GM10248 (cell line): ENCODE measurements at regions of chr17 and their contacts with region 1.

Region 1: DNA sequence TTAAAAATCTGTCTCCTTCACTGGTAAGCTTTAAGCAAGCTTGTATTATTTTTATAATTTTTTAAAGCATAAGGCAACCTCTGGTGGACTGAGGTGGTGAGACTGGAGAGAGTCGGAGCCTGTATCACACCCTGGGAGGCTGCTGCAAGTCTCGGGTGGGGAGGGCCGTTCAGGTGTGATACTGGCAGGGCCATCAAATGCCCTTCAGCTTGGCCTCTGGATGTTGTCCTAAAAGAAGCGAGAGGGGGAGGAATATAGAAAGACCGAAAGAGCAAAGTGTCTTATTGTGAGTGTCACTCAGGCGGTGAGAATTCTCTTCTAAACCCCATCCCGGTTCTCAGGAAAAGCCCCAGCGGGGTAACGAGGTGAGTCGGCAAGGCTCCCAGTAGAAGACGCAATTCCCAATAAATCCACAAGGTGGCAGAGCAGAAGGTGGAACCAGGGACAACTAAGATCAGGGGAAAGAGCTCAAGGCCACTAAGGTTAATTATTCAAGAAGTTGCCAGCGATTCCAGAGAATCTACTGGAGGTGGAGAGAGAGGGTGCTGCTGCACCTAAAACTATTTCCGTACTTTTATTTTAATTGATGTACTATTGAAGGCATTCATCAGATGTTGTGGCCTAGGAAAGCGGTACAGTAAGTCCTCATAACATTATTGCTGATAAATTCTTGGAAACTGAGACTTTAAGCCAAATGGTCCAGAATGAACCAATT is 14.1 kb downstream of the C17orf67 start:
- DNase-seq: peak; percentile 83
- CTCF ChIP-seq: peak; percentile 75

Region 2: DNA sequence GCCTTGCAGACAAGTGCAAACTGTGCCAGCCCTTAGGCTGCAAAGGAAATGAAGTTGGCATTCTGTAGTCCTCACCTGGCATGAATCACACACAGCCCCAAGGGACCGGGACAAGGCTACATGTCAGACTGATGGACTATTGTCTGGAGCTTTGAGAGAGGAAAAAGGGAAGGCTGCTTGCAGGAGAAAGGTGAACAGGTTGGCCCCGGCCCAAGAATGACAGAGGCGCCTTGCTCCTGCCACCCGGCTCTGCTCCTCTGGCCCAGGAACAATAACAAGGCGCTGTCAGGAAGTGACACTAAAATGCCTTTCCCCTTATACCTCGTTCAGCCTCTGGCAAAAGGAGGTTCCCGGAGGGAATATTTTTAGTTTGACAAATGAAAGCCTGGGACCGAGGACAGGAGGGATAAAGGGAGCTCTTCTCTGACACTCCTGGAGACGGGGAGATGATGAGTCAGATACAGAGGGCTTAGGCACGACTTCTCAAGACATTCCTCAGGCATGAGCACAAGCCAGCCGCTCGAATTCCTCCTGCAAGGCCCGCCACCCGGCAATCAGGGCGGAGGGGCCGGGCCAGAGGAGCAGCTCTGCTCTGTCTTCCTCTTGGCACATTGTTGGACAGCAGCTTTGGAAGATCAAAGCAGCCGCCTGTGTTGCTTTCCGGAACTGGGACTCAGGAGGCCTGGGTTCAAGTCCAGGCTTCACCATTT is 120.2 kb before region 1 on chr17:
- CTCF ChIA-PET with region 1: no interaction called
- POLR2A ChIA-PET with region 1: no interaction called
- DNase-seq: no peak
- CTCF ChIP-seq: no peak

Region 3: GRCh38 chr17:56833809-56834379 is 14.3 kb after region 1 on chr17 and contains the starts of genes C17orf67 and DGKE:
- CTCF ChIA-PET with region 1: interaction called, 44 read pairs
- POLR2A ChIA-PET with region 1: interaction called, 3 read pairs
- DNase-seq: peak; percentile 99
- CTCF ChIP-seq: no peak

Region 4: DNA sequence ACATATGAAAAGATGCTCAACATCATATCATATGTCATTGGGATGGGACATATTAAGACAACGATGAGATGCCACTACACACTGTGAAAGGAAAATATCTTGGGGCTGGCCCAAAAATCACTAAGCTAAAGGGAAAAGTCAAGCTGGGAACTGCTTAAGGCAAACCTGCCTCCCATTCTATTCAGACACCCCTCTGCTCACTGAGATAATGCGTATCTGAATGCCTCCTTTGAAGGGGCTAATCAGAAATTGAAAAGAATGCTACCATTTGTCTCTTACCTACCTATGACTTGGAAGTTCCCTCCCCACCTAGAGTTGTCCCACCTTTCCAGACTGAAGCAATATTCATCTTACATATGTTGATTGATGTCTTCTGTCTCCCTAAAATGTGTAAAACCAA is 105.5 kb after region 1 on chr17:
- CTCF ChIA-PET with region 1: interaction called, 15 read pairs
- POLR2A ChIA-PET with region 1: no interaction called
- DNase-seq: no peak
- CTCF ChIP-seq: no peak

Region 5: DNA sequence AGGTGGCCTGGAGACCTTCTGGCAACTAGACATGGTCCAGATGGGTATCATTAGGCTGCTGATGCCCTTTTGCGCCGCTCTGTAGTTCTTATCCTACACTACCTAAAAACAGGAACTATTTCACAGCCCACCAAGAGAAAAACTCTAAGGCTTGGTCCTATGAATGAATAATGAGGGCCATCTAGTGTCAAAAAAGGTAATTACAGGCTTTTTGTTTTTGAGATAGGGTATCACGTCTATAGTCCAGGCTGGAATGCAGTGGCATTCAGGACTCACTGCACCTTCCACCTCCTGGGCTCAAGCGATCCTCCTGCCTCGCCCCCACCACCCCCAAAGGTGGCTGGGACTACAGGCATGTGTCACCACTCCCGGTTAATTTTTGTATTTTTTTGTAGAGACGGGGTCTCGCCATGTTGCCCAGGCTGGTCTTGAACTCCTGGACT is 120.3 kb after region 1 on chr17:
- CTCF ChIA-PET with region 1: interaction called, 144 read pairs
- POLR2A ChIA-PET with region 1: no interaction called
- DNase-seq: peak; percentile 70
- CTCF ChIP-seq: peak; percentile 59

Region 6: DNA sequence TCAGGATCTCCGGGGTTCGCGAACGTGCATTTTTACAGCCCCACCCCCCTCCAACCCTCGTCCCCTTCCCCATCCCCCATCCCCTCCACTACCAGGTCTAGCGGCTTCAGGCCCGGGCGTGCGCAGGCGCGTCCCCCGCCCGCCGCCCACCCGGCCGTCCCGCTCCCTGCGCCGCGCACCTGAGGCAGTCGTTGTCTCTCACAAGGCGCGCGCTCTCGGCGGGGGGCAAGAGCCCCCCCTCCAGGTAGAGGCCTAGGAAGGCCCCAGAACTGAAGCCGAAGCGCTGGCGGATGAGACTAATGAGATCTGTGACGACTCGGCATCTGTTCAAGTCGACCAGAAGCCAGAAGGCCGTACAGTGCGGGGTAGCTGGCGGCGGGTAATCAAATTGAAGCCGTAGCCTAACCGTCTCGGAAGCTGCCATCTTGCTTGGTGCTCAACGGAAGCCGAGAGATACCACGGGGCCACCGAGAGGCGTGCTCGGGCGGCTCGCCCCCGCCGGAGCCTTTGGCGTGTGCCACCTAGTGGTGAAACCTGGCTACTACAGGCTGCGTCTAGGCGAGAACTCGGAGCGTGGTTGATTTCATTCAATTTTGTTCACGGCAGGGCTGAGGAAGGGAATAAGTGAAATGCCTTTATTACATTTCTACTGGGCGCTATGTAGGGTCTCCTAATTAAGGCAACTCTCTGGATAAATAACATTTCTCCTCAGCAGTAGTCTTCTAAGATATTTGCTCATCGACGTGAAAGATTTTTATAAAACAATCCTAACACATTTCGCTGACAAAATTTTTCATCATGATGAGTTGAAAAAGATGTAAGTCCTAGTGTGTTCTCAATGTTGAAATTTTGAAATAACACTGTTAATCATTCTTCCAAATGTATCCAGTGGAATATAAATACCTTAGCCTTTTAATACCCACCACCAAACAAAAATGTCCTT is 141.3 kb after region 1 on chr17 and contains the start of gene COIL:
- CTCF ChIA-PET with region 1: interaction called, 11 read pairs
- POLR2A ChIA-PET with region 1: no interaction called
- DNase-seq: peak; percentile 93
- CTCF ChIP-seq: peak; percentile 96